HEK293T (cell line): ENCODE measurements at regions of chr4 and their contacts with region 1.

Region 1: GRCh38 chr4:3791978-3792542 is 25.9 kb downstream of the ADRA2C start:
- DNase-seq: peak; percentile 68

Region 2: GRCh38 chr4:3777669-3778068 is 14.4 kb before region 1 on chr4:
- CTCF ChIA-PET with region 1: no interaction called
- POLR2A ChIA-PET with region 1: no interaction called
- DNase-seq: no peak

Region 3: GRCh38 chr4:3880615-3881120 is 88.6 kb after region 1 on chr4:
- CTCF ChIA-PET with region 1: interaction called, 10 read pairs
- POLR2A ChIA-PET with region 1: no interaction called
- DNase-seq: peak; percentile 82